ENCODE measurements at regions of chr6 and their contacts with region 1.

Region 1: GRCh38 chr6:157891544-157892362 is 68.7 kb downstream of the SNX9 start:
- DNase-seq: no peak
- H3K4me3 ChIP-seq: no peak overlapping the region
- CTCF ChIP-seq: no peak
- POLR2A ChIP-seq: no peak

Region 2: GRCh38 chr6:157629220-157629619 is 262.5 kb before region 1 on chr6:
- intact Hi-C with region 1: no loop called
- DNase-seq: no peak
- H3K4me3 ChIP-seq: no peak overlapping the region
- CTCF ChIP-seq: no peak
- POLR2A ChIP-seq: no peak

Region 3: GRCh38 chr6:157873735-157874344 is 17.9 kb before region 1 on chr6:
- intact Hi-C with region 1: loop called (anchors 2 kb)
- DNase-seq: peak; percentile 57 to 95
- H3K4me3 ChIP-seq: no peak overlapping the region
- CTCF ChIP-seq: peak in 1 of 3 donors; percentile 49
- POLR2A ChIP-seq: no peak

Measured in lower leg skin (tissue), 4 donors.